ENCODE measurements at regions of chr7 and their contacts with region 1.

Region 1: GRCh38 chr7:68601826-68602225 is 996.4 kb upstream of the AUTS2 start:
- DNase-seq: no peak
- H3K4me3 ChIP-seq: no peak overlapping the region
- H3K27ac ChIP-seq: no peak overlapping the region
- H3K4me1 ChIP-seq: no peaks in the 10 kb centered on the region
- H3K27me3 ChIP-seq: no peaks in the 10 kb centered on the region
- CTCF ChIP-seq: no peak
- EP300 ChIP-seq: no peak
- RAD21 ChIP-seq: no peak

Region 2: GRCh38 chr7:68258609-68259008 is 343.2 kb before region 1 on chr7:
- CTCF ChIA-PET with region 1: no interaction called
- POLR2A ChIA-PET with region 1: no interaction called
- DNase-seq: peak; percentile 15
- H3K4me3 ChIP-seq: no peak overlapping the region
- H3K27ac ChIP-seq: no peak overlapping the region
- H3K4me1 ChIP-seq: peaks cover 0 to 3% of the 10 kb centered on the region in 2 experiments; a peak in 1 of 4 replicates
- H3K27me3 ChIP-seq: no peaks in the 10 kb centered on the region
- CTCF ChIP-seq: no peak
- EP300 ChIP-seq: no peak
- RAD21 ChIP-seq: no peak

Region 3: DNA sequence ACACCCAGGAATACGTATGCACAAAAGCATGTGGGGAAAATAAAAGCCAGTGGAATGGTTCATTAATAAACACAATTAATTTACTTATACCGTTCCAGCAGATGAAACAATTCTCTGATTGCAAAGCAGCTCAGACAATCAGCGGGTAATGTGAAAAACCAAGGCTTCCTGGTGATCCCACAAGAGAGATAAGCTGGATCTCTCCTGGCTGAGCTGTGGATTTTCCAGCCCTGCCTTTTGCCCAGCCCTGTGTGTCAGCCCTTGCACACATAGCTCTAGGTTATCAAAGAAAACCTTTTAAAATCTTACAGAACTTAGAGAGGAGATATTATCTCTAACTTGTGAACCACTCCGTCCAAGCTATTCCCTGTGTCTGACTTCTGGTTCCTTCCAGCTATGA is 14.2 kb before region 1 on chr7:
- CTCF ChIA-PET with region 1: interaction called, 10 read pairs
- POLR2A ChIA-PET with region 1: no interaction called
- DNase-seq: peak; percentile 45
- H3K4me3 ChIP-seq: no peak overlapping the region
- H3K27ac ChIP-seq: no peak overlapping the region
- H3K4me1 ChIP-seq: peaks cover 0 to 3% of the 10 kb centered on the region in 2 experiments; a peak in 1 of 4 replicates
- H3K27me3 ChIP-seq: no peaks in the 10 kb centered on the region
- CTCF ChIP-seq: no peak
- EP300 ChIP-seq: no peak
- RAD21 ChIP-seq: no peak

Region 4: DNA sequence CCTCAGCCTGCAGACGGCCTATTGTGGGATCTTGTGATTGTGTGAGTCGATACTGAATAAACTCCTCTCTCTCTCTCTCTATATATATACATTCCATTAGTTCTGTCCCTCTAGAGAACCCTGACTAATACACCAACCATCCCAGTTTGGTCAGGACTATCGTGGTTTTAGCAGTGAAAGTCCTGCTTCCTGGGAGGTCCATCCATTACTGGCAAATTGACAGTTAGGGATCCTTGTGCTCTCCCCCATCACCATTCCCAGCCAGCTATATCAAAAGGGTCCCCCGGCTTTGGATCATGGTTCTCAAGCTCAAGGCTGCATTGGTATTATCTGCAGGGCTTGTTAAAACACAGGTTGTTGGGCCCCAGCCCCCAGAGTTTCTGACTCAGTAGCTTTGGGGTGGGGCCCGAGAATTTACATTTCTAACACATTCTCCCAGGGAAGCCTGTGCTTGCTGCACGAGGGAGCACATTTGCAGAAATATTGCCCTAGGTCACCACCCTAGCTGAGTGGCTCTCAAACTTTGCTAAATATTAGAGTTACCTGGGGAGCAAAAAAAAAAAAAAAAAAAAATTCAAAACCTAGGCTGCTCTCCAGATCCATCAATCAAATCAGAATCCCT is 97.4 kb after region 1 on chr7:
- CTCF ChIA-PET with region 1: no interaction called
- POLR2A ChIA-PET with region 1: no interaction called
- DNase-seq: no peak
- H3K4me3 ChIP-seq: no peak overlapping the region
- H3K27ac ChIP-seq: peak overlapping the region in 1 of 2 experiments; percentile 97; a peak in 2 of 4 replicates
- H3K4me1 ChIP-seq: peaks cover 15 to 29% of the 10 kb centered on the region in 2 experiments; a peak in 3 of 4 replicates
- H3K27me3 ChIP-seq: no peaks in the 10 kb centered on the region
- CTCF ChIP-seq: no peak
- EP300 ChIP-seq: peak in 1 of 2 experiments; percentile 95; a peak in 2 of 4 replicates
- RAD21 ChIP-seq: no peak

Measured in SK-N-SH (cell line).